ENCODE measurements at regions of chr6 and their contacts with region 1.

Region 1: DNA sequence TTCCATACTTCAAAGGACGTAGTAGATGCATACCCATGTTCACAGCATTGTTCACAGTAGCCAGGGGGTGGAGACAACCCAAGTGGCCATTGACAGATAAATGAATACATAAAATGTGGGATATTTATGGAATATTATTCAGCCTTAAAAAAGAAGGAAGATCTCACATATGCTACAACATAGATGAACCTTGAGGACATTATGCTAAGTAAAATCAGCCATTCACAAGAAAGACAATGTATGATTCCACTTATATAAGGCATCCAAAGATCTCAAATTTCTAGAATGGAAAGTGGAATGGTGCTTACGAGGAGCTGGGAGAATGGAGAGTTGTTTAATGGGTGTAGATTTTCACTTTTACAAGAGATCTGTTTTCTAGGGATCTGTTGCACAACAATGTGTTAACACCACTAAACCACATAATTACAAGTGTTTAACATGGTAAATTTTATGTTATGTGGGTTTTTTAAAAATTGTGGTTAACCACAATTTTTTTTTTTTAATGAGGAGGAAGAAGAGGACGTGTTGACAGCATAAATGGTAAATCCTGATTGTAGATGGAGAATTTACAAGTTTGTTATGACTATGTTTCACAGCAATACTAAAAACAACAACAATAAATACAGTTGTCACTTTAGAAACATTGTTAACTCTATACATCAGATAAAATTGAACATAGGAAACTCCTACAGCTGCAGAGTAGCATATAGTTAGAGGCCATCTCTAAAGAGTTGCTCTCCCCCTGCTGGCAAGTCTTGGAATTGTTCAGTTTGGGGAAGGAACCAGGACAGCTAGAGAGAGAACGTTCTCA is 41.6 kb downstream of the CCN2 start:
- DNase-seq: peak; percentile 53 to 75 (median 58)
- ATAC-seq: peak in 1 of 2 donors; percentile 84
- H3K4me3 ChIP-seq: no peak overlapping the region
- H3K27ac ChIP-seq: no peak overlapping the region
- H3K4me1 ChIP-seq: no peaks in the 10 kb centered on the region
- H3K27me3 ChIP-seq: no peaks in the 10 kb centered on the region

Region 2: DNA sequence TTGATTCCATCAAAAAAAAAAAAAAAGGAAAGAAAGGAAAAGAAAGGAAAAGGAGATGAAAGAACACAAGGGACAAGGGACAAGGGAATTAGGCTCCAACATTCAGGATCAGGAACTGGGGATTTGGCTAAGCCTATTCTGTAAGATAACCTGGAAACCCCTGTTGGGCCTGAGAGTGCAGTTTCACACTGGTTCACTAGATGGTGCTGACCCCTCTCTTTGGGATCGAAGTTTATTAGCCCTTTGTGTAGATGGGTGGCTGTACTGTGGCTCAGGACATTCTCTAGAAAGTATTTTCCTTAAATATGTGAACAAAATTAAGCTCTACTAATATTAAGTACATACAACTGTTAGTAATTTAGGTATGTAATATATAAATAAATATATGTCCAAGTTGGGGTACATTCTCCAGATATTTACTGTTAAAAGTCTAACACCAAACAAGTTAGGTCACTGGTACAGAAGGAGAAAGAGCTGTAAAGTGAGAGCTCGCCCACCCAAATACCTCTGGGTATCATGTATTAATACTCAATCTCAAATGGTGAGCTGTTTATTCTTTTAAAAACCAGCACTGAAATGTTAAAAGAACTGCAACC is 214.7 kb before region 1 on chr6:
- intact Hi-C with region 1: loop called (anchors 5 to 10 kb)
- DNase-seq: peak in 2 of 3 donors; percentile 25 to 64
- ATAC-seq: peak; percentile 84 to 86
- H3K4me3 ChIP-seq: no peak overlapping the region
- H3K27ac ChIP-seq: no peak overlapping the region
- H3K4me1 ChIP-seq: no peaks in the 10 kb centered on the region
- H3K27me3 ChIP-seq: no peaks in the 10 kb centered on the region

Region 3: DNA sequence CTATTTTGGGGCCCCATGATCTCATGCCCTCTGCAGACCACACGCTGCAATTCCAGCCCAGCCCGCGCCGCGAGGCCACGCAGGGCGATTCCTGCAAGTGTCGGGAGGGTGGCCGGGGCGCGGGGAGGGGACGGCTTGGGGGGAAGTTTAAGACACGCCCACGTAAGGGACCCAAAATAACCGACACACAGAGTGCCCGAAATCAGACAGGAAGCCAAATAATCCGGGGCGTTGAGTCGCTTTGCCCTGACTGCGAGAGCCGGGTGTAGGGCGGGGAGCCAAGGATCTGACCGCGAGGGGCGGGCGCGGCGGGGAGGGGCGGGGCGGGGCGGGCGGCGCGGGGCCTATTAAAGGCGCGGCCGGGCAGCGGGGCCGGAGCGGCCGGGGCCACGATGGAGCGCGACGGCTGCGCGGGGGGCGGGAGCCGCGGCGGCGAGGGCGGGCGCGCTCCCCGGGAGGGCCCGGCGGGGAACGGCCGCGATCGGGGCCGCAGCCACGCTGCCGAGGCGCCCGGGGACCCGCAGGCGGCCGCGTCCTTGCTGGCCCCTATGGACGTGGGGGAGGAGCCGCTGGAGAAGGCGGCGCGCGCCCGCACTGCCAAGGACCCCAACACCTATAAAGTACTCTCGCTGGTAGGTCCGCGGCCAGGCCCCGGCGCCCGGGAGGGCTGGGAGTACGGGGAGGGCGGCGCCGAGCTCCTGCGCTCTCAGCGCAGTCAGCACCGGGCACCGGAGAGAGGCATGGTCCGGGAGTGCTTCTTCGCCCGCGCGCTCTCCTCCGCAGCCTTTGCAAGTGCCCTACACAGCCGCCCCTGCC is 101.8 kb before region 1 on chr6 and contains the start of gene ENPP1:
- intact Hi-C with region 1: loop called in 1 of 4 experiments (anchors 10 kb)
- DNase-seq: peak; percentile 84 to 92 (median 92)
- ATAC-seq: peak; percentile 96 to 97
- H3K4me3 ChIP-seq: peak within 1 kb of the TSS; percentile 95
- H3K27ac ChIP-seq: peak within 1 kb of the TSS; percentile 66
- H3K4me1 ChIP-seq: no peaks in the 10 kb centered on the region
- H3K27me3 ChIP-seq: no peaks in the 10 kb centered on the region
- total RNA-seq, gene ENPP1: 2.6 to 4.5 (median 3.1) TPM

Region 4: DNA sequence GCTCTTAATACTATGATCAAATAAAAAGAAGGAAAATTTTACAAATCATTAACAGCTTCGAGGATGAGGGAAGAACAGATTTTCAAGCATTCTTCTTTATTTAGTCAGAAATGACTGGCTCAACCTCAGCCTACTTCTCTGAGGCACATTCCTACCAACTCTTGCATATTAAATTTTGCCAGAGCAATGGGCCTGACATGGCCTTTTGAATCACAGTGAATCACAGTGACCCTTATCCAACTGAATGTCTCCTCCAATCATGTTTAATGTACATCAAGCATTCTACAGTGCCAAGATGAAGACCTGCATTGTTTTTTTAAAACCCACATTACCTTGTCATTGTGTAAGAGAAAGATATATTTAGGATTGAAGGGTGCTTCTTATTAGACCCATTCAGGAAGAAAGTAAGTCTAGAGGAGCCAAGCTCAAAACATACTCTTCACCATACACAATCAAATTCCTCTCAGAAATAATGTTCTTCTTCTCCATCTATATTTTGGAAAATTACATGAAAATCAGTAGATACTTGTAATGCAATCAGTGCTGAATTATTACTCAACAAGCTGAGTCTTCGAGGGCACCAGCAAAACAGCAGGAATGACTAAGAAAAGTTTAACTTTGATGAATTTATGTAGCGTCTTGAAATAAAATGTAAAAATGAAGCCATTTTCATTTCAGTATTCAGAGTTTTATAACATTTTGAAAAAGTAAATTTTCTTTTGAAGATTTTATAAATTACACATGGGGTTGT is 535.8 kb after region 1 on chr6:
- intact Hi-C with region 1: no loop called
- DNase-seq: no peak
- ATAC-seq: no peak
- H3K4me3 ChIP-seq: no peak overlapping the region
- H3K27ac ChIP-seq: no peak overlapping the region
- H3K4me1 ChIP-seq: no peaks in the 10 kb centered on the region
- H3K27me3 ChIP-seq: no peaks in the 10 kb centered on the region